Activated CD8-positive, alpha-beta T cell treated with anti-CD3 and anti-CD28 coated beads, Interleukin-2, amount 10 ng/mL, durations not matched to agents 7 days and 5 days (primary cell): ENCODE measurements at regions of chr1 and their contacts with region 1.

Region 1: GRCh38 chr1:160376525-160377131 is 9.8 kb downstream of the NHLH1 start:
- DNase-seq: peak; percentile 55
- ATAC-seq: peak; percentile 73
- H3K4me3 Mint-ChIP-seq: no peak overlapping the region
- H3K27ac Mint-ChIP-seq: no peak overlapping the region
- H3K4me1 Mint-ChIP-seq: peaks cover 13% of the 10 kb centered on the region
- H3K27me3 Mint-ChIP-seq: peaks cover 8% of the 10 kb centered on the region

Region 2: DNA sequence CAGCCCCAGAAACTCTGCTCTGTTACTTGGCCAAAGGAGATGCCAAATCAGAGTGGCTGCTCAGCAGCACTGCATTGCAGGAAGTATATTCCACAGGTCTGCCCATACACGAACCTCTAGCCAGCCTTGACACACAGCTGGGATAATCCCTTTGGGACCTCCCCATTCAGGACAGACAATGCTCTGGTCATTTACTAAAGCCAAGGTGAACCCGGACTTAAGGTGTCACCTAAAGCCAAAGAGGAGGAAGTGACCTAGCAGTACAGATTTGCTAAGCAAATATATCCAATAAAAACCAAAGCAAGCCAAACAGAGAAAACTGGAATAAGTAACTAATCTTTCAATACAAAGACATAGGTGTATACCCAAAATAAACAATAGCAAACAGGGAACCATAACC is 61.3 kb before region 1 on chr1:
- CTCF ChIA-PET with region 1: no interaction called
- POLR2A ChIA-PET with region 1: no interaction called
- DNase-seq: no peak
- ATAC-seq: no peak
- H3K4me3 Mint-ChIP-seq: no peak overlapping the region
- H3K27ac Mint-ChIP-seq: peak overlapping the region; percentile 21
- H3K4me1 Mint-ChIP-seq: no peaks in the 10 kb centered on the region
- H3K27me3 Mint-ChIP-seq: no peaks in the 10 kb centered on the region

Region 3: DNA sequence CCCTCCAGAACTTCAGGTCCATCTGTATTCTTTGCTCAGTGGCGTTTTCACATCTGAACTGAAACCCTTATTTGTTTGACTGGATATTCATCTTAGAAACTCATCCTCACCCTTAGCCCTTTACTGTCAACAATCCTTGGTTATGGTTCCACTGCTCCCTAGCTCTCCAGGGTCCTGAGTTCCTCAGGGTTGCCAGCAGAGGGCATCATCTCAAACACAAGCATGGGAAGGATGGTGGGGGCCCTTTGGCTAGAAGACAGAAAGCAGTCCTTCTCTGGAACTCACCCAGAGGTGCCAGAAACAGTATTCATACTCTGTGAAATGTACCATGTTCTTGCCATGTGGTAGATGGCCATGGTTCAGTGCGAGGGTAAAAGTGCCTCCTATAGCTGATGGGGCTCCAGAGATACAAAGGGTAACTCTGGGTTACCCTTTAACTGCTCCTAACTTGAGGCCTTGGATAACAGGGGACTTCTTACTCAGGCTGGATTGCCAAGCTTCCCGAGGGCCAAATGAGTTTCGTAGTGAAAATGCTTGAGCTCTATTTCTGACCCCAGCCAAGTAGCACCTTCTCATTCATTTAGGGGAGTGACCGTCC is 22.1 kb before region 1 on chr1:
- CTCF ChIA-PET with region 1: interaction called, 78 read pairs
- POLR2A ChIA-PET with region 1: interaction called, 6 read pairs
- DNase-seq: peak; percentile 30
- ATAC-seq: peak; percentile 61
- H3K4me3 Mint-ChIP-seq: no peak overlapping the region
- H3K27ac Mint-ChIP-seq: no peak overlapping the region
- H3K4me1 Mint-ChIP-seq: no peaks in the 10 kb centered on the region
- H3K27me3 Mint-ChIP-seq: no peaks in the 10 kb centered on the region

Region 4: GRCh38 chr1:160394673-160395072 is 18.0 kb after region 1 on chr1:
- CTCF ChIA-PET with region 1: interaction called, 11 read pairs
- POLR2A ChIA-PET with region 1: no interaction called
- DNase-seq: no peak
- ATAC-seq: no peak
- H3K4me3 Mint-ChIP-seq: no peak overlapping the region
- H3K27ac Mint-ChIP-seq: no peak overlapping the region
- H3K4me1 Mint-ChIP-seq: no peaks in the 10 kb centered on the region
- H3K27me3 Mint-ChIP-seq: peaks cover 36% of the 10 kb centered on the region